HepG2 (cell line): ENCODE measurements at regions of chr10 and their contacts with region 1.

Region 1: GRCh38 chr10:107899075-107899474 is 734.6 kb upstream of the SORCS1 start:
- DNase-seq: no peak
- ATAC-seq: no peak
- H3K4me3 ChIP-seq: no peak overlapping the region
- H3K27ac ChIP-seq: no peak overlapping the region
- H3K4me1 ChIP-seq: no peaks in the 10 kb centered on the region
- H3K27me3 ChIP-seq: no peaks in the 10 kb centered on the region
- CTCF ChIP-seq: no peak
- EP300 ChIP-seq: no peak
- POLR2A ChIP-seq: no peak
- RAD21 ChIP-seq: no peak

Region 2: GRCh38 chr10:106661767-106662140 is 1237.3 kb before region 1 on chr10:
- CTCF ChIA-PET with region 1: no interaction called
- POLR2A ChIA-PET with region 1: no interaction called
- in situ Hi-C with region 1: no loop called
- intact Hi-C with region 1: loop called (anchors 5 kb)
- DNase-seq: no peak
- ATAC-seq: no peak
- H3K4me3 ChIP-seq: no peak overlapping the region
- H3K27ac ChIP-seq: no peak overlapping the region
- H3K4me1 ChIP-seq: no peaks in the 10 kb centered on the region
- H3K27me3 ChIP-seq: no peaks in the 10 kb centered on the region
- CTCF ChIP-seq: no peak
- EP300 ChIP-seq: no peak
- POLR2A ChIP-seq: no peak
- RAD21 ChIP-seq: no peak

Region 3: GRCh38 chr10:107924458-107924857 is 25.4 kb after region 1 on chr10:
- CTCF ChIA-PET with region 1: no interaction called
- POLR2A ChIA-PET with region 1: no interaction called
- in situ Hi-C with region 1: no loop called
- intact Hi-C with region 1: no loop called
- DNase-seq: no peak
- ATAC-seq: no peak
- H3K4me3 ChIP-seq: no peak overlapping the region
- H3K27ac ChIP-seq: no peak overlapping the region
- H3K4me1 ChIP-seq: no peaks in the 10 kb centered on the region
- H3K27me3 ChIP-seq: no peaks in the 10 kb centered on the region
- CTCF ChIP-seq: no peak
- EP300 ChIP-seq: no peak
- POLR2A ChIP-seq: no peak
- RAD21 ChIP-seq: no peak